Caco-2 (cell line): ENCODE measurements at regions of chr10 and their contacts with region 1.

Region 1: GRCh38 chr10:53140500-53140899 is 367.9 kb upstream of the MBL2 start:
- DNase-seq: no peak
- H3K4me3 ChIP-seq: no peak overlapping the region
- H3K4me3 Mint-ChIP-seq: no peak overlapping the region
- H3K27ac Mint-ChIP-seq: no peak overlapping the region
- H3K4me1 ChIP-seq: peaks cover 29% of the 10 kb centered on the region
- H3K4me1 Mint-ChIP-seq: peaks cover 26% of the 10 kb centered on the region
- H3K27me3 ChIP-seq: no peaks in the 10 kb centered on the region
- H3K27me3 Mint-ChIP-seq: no peaks in the 10 kb centered on the region
- CTCF ChIP-seq: no peak

Region 2: GRCh38 chr10:53033396-53033795 is 107.1 kb before region 1 on chr10:
- CTCF ChIA-PET with region 1: no interaction called
- POLR2A ChIA-PET with region 1: no interaction called
- intact Hi-C with region 1: loop called (anchors 5 kb)
- DNase-seq: no peak
- H3K4me3 ChIP-seq: no peak overlapping the region
- H3K4me3 Mint-ChIP-seq: no peak overlapping the region
- H3K27ac Mint-ChIP-seq: no peak overlapping the region
- H3K4me1 ChIP-seq: peaks cover 31% of the 10 kb centered on the region
- H3K4me1 Mint-ChIP-seq: peaks cover 22% of the 10 kb centered on the region
- H3K27me3 ChIP-seq: no peaks in the 10 kb centered on the region
- H3K27me3 Mint-ChIP-seq: no peaks in the 10 kb centered on the region
- CTCF ChIP-seq: no peak

Region 3: DNA sequence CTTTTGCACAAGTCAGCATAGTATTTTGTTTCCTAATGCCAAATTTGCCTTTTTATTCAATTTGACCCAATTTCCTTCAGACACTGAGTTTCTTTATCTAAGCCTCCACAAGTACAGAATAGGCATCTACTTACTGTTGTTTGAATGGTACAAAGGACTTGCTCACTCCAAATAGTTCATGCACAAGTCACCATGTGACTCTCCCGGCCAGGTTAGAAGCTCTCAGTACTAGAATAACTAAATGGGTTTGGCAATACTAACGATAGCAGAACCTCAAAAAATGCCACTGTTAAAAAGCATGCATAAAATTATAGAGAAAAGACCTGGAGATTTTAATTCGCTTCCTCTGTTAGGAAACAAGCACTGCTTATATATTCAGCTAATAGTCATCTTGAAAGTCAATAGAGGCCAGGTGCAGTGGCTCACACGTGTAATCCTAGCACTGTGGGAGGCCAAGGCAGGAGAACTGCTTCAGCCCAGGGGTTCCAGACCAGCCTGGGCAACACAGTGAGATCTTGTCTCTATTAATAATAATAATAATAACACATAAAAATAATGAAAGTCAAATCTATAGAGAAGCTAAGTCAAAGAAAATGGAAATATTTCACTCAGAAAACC is 32.1 kb before region 1 on chr10:
- CTCF ChIA-PET with region 1: no interaction called
- POLR2A ChIA-PET with region 1: no interaction called
- intact Hi-C with region 1: loop called (anchors 2 kb)
- DNase-seq: no peak
- H3K4me3 ChIP-seq: no peak overlapping the region
- H3K4me3 Mint-ChIP-seq: no peak overlapping the region
- H3K27ac Mint-ChIP-seq: no peak overlapping the region
- H3K4me1 ChIP-seq: peaks cover 11% of the 10 kb centered on the region
- H3K4me1 Mint-ChIP-seq: peaks cover 15% of the 10 kb centered on the region
- H3K27me3 ChIP-seq: no peaks in the 10 kb centered on the region
- H3K27me3 Mint-ChIP-seq: no peaks in the 10 kb centered on the region
- CTCF ChIP-seq: no peak